ENCODE measurements at regions of chr9 and their contacts with region 1.

Region 1: GRCh38 chr9:129626079-129626624 is at the start of gene NTMT1:
- DNase-seq: peak; percentile 82 to 93 (median 89)
- H3K4me3 ChIP-seq: peak within 1 kb of the TSS; percentile 100
- H3K4me3 Mint-ChIP-seq: peak within 1 kb of the TSS; percentile 82 to 93 (median 89)
- H3K27ac ChIP-seq: peak within 1 kb of the TSS; percentile 97
- H3K27ac Mint-ChIP-seq: peak within 1 kb of the TSS; percentile 86 to 99 (median 97)
- H3K4me1 ChIP-seq: peaks cover 54% of the 10 kb centered on the region
- H3K4me1 Mint-ChIP-seq: peaks cover 48 to 63% (median 62%) of the 10 kb centered on the region in 3 donors
- H3K27me3 ChIP-seq: peaks cover 8% of the 10 kb centered on the region
- H3K27me3 Mint-ChIP-seq: peaks cover 6 to 11% of the 10 kb centered on the region in 2 donors
- total RNA-seq, gene NTMT1: 65.5 to 68.9 TPM

Region 2: GRCh38 chr9:129641746-129642513 is 15.8 kb after region 1 on chr9 and contains the start of gene ASB6:
- CTCF ChIA-PET with region 1: interaction called, 75 read pairs
- POLR2A ChIA-PET with region 1: interaction called, 3 read pairs
- DNase-seq: peak; percentile 86 to 94 (median 92)
- H3K4me3 ChIP-seq: peak within 1 kb of the TSS; percentile 95
- H3K4me3 Mint-ChIP-seq: peak within 1 kb of the TSS; percentile 83 to 91 (median 85)
- H3K27ac ChIP-seq: peak within 1 kb of the TSS; percentile 90
- H3K27ac Mint-ChIP-seq: peak within 1 kb of the TSS; percentile 78 to 96 (median 87)
- H3K4me1 ChIP-seq: peaks cover 15% of the 10 kb centered on the region
- H3K4me1 Mint-ChIP-seq: peaks cover 15 to 34% (median 24%) of the 10 kb centered on the region in 3 donors
- H3K27me3 ChIP-seq: no peaks in the 10 kb centered on the region
- H3K27me3 Mint-ChIP-seq: peaks cover 0 to 3% of the 10 kb centered on the region in 2 donors
- total RNA-seq, gene ASB6: 28.0 to 28.3 TPM